WTC11 (cell line): ENCODE measurements at regions of chr12 and their contacts with region 1.

Region 1: DNA sequence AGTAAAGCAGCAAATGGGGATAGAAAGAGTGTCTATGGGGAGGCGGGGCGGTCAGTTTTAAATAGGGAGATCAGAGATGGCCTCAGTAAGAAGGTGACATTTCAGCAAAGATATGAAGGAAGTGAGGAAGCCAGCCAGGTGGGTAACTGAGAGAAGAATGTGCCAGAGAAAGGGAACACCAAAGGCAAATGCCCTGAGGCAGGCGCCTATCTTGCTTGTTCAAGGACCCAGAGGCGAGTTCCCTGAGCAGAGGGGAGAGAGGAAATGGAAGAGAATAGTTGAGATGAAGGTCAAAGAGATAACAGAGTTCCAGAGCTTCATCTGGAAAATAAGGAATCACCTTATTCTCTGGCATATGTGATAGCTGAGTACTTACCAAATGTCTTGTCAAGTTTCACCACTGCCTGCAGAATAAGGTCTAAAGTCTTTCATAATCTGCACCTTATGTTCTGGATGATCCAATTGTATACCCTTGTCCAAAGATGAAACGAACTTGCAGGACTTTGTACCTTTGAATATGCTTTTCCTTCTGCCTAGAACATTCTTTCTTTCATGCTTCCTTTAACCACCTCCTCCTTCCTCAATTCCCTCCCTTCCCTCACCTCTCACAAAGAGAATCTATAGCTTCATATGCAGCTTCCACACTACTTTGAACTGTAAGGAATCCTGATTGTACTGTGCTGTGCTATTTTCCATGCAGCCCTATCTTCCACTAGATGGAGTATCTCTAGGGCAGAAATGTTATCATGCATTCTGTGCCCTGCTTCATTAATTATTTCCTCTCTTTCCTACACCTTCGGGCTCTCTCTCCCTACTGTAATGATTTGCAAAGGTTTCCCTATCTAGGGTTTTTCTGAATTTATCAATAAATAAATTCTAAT is 38.5 kb downstream of the GNPTAB start:
- DNase-seq: no peak
- ATAC-seq: peak; percentile 62; the same call in 1 of the 2 replicates
- H3K4me3 Mint-ChIP-seq: no peak overlapping the region
- H3K27ac Mint-ChIP-seq: peak overlapping the region; percentile 35; the same call in 1 of the 2 replicates
- H3K4me1 Mint-ChIP-seq: no peaks in the 10 kb centered on the region
- H3K27me3 Mint-ChIP-seq: no peaks in the 10 kb centered on the region
- CTCF ChIP-seq: no peak

Region 2: GRCh38 chr12:101803978-101804377 is 11.7 kb after region 1 on chr12:
- CTCF ChIA-PET with region 1: no interaction called
- POLR2A ChIA-PET with region 1: no interaction called
- DNase-seq: no peak
- ATAC-seq: no peak
- H3K4me3 Mint-ChIP-seq: no peak overlapping the region
- H3K27ac Mint-ChIP-seq: no peak overlapping the region
- H3K4me1 Mint-ChIP-seq: peaks cover 15% of the 10 kb centered on the region
- H3K27me3 Mint-ChIP-seq: no peaks in the 10 kb centered on the region
- CTCF ChIP-seq: no peak

Region 3: DNA sequence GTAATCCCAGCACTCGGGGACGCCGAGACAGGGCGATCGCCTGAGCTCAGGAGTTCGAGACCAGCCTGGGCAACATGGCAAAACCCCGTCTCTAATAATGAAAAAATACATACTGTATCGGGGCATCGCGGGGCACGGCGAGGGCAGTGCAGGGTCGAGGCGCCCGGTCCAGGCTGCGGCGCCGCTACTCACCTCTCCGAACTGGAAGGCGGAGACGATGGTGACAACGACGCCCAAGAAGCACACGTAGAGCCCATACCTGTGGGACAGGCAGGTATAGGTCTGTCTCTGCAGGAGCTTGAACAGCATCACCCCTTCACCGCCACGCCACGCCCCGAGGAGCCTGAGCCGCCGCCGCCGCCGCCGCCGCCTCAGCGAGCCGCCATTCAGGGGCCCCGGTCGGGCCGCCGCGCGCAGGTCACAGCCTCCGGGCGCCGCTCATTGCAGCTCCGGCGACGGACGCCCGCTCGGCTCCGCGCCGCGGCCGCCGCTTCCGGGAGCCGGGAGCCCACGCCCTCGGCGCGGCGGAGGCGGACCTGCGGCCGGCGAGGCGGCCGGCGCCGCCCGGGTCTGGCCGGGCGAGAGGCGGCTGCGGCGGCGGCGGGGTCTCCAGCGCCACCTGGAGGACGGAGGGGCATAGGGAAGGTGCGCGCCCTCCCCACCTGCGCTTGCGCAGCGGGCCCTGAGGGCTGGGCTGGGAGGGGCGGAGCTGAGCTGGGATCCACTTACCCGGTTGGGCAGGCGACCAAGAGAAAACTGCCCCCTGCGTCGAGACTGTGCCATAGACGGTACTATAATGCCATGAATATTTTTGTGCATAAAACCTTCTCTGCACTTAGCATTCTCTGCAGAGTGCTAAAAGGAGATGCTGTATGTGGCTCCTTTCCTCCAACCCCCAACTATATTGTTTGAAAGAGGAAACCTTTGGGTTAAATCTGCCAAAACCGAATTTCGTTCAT is 38.4 kb after region 1 on chr12 and contains the start of gene GNPTAB:
- CTCF ChIA-PET with region 1: interaction called, 13 read pairs
- POLR2A ChIA-PET with region 1: no interaction called
- DNase-seq: peak; percentile 92
- ATAC-seq: peak; percentile 94
- H3K4me3 Mint-ChIP-seq: peak within 1 kb of the TSS; percentile 96
- H3K27ac Mint-ChIP-seq: peak within 1 kb of the TSS; percentile 60; the same call in 1 of the 2 replicates
- H3K4me1 Mint-ChIP-seq: peaks cover 31% of the 10 kb centered on the region
- H3K27me3 Mint-ChIP-seq: no peaks in the 10 kb centered on the region
- CTCF ChIP-seq: peak; percentile 67
- total RNA-seq, gene GNPTAB: 22.5 to 25.4 TPM (median 24.4 TPM) in 3 replicates